WTC11 (cell line): ENCODE measurements at regions of chr1 and their contacts with region 1.

Region 1: GRCh38 chr1:207619871-207620542 is 24.9 kb upstream of the CR1L start:
- DNase-seq: no peak
- ATAC-seq: peak; percentile 98
- H3K4me3 Mint-ChIP-seq: no peak overlapping the region
- H3K27ac Mint-ChIP-seq: no peak overlapping the region; the same call in 1 of the 2 replicates
- H3K4me1 Mint-ChIP-seq: peaks cover 15% of the 10 kb centered on the region
- H3K27me3 Mint-ChIP-seq: no peaks in the 10 kb centered on the region
- CTCF ChIP-seq: peak; percentile 66

Region 2: GRCh38 chr1:207355060-207355459 is 264.9 kb before region 1 on chr1:
- CTCF ChIA-PET with region 1: no interaction called
- POLR2A ChIA-PET with region 1: no interaction called
- DNase-seq: no peak
- ATAC-seq: no peak
- H3K4me3 Mint-ChIP-seq: no peak overlapping the region
- H3K27ac Mint-ChIP-seq: no peak overlapping the region
- H3K4me1 Mint-ChIP-seq: peaks cover 23% of the 10 kb centered on the region
- H3K27me3 Mint-ChIP-seq: no peaks in the 10 kb centered on the region
- CTCF ChIP-seq: no peak

Region 3: GRCh38 chr1:207579436-207579799 is 40.6 kb before region 1 on chr1:
- CTCF ChIA-PET with region 1: interaction called, 25 read pairs
- POLR2A ChIA-PET with region 1: interaction called, 4 read pairs
- DNase-seq: peak; percentile 72
- ATAC-seq: peak; percentile 98
- H3K4me3 Mint-ChIP-seq: no peak overlapping the region
- H3K27ac Mint-ChIP-seq: 0 out of 2 replicates have a peak overlapping the region, but pooled peaks have one; percentile 18
- H3K4me1 Mint-ChIP-seq: peaks cover 23% of the 10 kb centered on the region
- H3K27me3 Mint-ChIP-seq: no peaks in the 10 kb centered on the region; the same call in 1 of the 2 replicates
- CTCF ChIP-seq: 0 out of 2 replicates have a peak, but pooled peaks have one; percentile 24

Region 4: GRCh38 chr1:207605444-207606361 is 14.3 kb before region 1 on chr1:
- CTCF ChIA-PET with region 1: interaction called, 14 read pairs
- POLR2A ChIA-PET with region 1: no interaction called
- DNase-seq: no peak
- ATAC-seq: peak; percentile 36; the same call in 1 of the 2 replicates
- H3K4me3 Mint-ChIP-seq: no peak overlapping the region
- H3K27ac Mint-ChIP-seq: no peak overlapping the region
- H3K4me1 Mint-ChIP-seq: peaks cover 2% of the 10 kb centered on the region
- H3K27me3 Mint-ChIP-seq: no peaks in the 10 kb centered on the region
- CTCF ChIP-seq: no peak

Region 5: DNA sequence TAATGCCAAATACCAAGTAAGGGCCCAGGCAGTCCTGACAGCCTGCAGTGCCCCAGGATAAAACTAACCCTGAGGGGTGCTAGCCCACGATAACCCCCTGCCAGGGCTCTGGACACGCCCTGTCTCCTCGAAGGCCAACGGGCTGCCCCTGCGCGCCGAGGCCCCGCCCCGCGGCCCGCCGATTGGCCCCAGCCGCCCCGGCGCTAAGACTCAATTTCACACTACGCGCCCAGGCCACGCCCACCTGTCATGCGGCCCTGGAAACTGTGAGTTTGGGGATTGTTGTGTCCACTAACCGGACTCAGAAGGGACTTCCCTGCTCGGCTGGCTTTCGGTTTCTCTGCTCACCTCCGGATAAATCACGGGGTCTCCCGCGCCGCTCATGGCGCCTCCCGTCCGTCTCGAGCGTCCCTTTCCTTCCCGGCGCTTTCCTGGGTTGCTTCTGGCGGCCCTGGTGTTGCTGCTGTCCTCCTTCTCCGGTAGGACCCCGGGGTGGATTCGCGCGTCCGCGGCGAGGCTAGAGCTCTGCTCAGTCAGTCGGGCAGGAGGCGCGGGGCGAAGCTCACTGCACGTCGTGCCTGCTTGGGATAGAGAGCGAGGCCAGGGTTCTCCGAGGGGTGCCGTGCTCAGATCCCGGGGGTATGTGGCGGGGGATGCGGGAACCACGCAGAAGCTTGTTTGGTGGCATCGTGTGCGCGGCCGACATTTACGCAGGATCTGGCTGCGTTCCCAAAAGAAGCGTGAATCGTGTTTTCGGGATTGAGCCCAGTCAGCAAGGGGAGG is 25.0 kb after region 1 on chr1 and contains the start of gene CR1L:
- CTCF ChIA-PET with region 1: interaction called, 15 read pairs
- POLR2A ChIA-PET with region 1: no interaction called
- DNase-seq: peak; percentile 94
- ATAC-seq: peak; percentile 92
- H3K4me3 Mint-ChIP-seq: peak within 1 kb of the TSS; percentile 83
- H3K27ac Mint-ChIP-seq: no peak within 1 kb of the TSS
- H3K4me1 Mint-ChIP-seq: peaks cover 61% of the 10 kb centered on the region
- H3K27me3 Mint-ChIP-seq: peaks cover 10% of the 10 kb centered on the region
- CTCF ChIP-seq: no peak
- total RNA-seq, gene CR1L: 12.5 to 16.5 TPM (median 13.7 TPM) in 3 replicates

Region 6: GRCh38 chr1:207672522-207673130 is 52.6 kb after region 1 on chr1:
- CTCF ChIA-PET with region 1: interaction called, 14 read pairs
- POLR2A ChIA-PET with region 1: no interaction called
- DNase-seq: peak; percentile 47
- ATAC-seq: peak; percentile 89
- H3K4me3 Mint-ChIP-seq: no peak overlapping the region
- H3K27ac Mint-ChIP-seq: no peak overlapping the region; the same call in 1 of the 2 replicates
- H3K4me1 Mint-ChIP-seq: peaks cover 40% of the 10 kb centered on the region
- H3K27me3 Mint-ChIP-seq: peaks cover 25% of the 10 kb centered on the region
- CTCF ChIP-seq: peak; percentile 37; the same call in 1 of the 2 replicates

Region 7: GRCh38 chr1:207711285-207711684 is 91.3 kb after region 1 on chr1:
- CTCF ChIA-PET with region 1: no interaction called
- POLR2A ChIA-PET with region 1: no interaction called
- DNase-seq: peak; percentile 22
- ATAC-seq: peak; percentile 87
- H3K4me3 Mint-ChIP-seq: no peak overlapping the region
- H3K27ac Mint-ChIP-seq: 0 out of 2 replicates have a peak overlapping the region, but pooled peaks have one; percentile 6
- H3K4me1 Mint-ChIP-seq: peaks cover 16% of the 10 kb centered on the region
- H3K27me3 Mint-ChIP-seq: no peaks in the 10 kb centered on the region
- CTCF ChIP-seq: no peak

Region 8: DNA sequence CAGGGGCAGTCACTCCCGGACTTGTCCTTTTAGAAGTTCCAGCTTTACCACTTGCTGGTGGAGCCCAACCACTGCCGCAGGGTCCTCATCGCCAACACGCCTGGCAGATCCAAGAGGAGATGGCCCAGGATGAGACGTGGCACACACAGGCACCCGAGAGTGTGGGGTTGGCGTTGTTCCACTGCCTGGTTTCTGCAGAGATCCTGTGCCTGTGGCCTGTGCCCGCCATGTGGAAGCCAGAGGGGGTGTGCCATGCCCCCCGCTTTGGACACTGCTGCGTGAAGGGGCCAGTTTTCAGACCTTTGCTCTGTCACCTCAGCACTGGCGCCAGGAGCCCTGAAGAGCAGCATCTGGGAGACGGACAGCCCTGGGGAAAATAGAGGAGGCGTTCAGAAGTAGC is 142.6 kb after region 1 on chr1:
- CTCF ChIA-PET with region 1: no interaction called
- POLR2A ChIA-PET with region 1: no interaction called
- DNase-seq: no peak
- ATAC-seq: no peak
- H3K4me3 Mint-ChIP-seq: no peak overlapping the region
- H3K27ac Mint-ChIP-seq: peak overlapping the region; percentile 74; the same call in 1 of the 2 replicates
- H3K4me1 Mint-ChIP-seq: no peaks in the 10 kb centered on the region
- H3K27me3 Mint-ChIP-seq: no peaks in the 10 kb centered on the region
- CTCF ChIP-seq: no peak